ENCODE measurements at regions of chr1 and their contacts with region 1.

Region 1: DNA sequence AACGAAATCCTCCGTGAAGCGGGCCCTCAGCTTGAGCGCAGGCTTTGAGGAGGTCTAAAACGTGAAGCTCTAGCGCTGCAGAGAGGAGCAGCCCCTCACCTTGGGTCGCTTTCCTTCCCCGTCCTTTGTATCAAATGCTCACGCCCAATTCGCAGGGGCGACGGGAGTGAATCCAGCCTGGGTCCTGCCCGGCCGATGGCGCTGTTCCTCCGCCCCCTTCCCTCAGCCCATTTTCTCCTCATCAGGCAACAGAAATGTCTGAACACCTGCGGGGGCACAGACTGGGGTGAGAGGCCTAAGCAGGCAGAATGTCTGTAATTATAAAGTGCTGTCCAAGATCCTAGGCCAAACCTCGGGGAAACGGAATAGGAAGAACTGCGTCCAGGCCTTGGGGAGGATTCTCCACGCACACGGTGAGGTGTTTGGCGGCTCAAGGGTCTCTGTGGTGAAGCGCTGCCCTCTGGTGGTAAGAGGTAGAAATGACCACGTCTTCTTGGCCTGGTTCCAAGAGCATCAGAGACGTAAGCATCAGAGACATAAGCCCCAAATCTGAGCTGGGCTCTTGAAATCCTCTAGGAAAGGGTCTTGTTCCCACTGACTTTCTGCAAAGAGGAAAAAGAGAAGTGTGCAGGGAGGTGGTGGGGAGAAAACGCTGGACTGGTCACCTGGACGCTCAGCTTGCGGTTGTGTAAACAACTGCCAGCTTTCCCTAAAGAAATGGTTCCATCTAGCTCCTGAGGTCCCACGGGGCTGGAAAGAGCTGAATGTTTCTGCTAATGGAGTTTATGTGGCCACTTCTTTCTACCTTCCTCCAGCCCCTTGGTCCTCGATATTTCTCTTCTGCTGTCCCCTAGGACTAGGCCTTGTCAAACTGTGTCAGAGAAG is 92.1 kb upstream of the CD53 start:
- DNase-seq: peak; percentile 83
- H3K4me3 Mint-ChIP-seq: no peak overlapping the region
- H3K27ac Mint-ChIP-seq: no peak overlapping the region
- H3K4me1 Mint-ChIP-seq: peaks cover 29% of the 10 kb centered on the region
- H3K27me3 Mint-ChIP-seq: no peaks in the 10 kb centered on the region

Region 2: GRCh38 chr1:110524311-110525251 is 256.3 kb before region 1 on chr1:
- CTCF ChIA-PET with region 1: interaction called, 90 read pairs
- POLR2A ChIA-PET with region 1: no interaction called
- intact Hi-C with region 1: loop called (anchors 1 kb)
- DNase-seq: peak; percentile 65
- H3K4me3 Mint-ChIP-seq: no peak overlapping the region
- H3K27ac Mint-ChIP-seq: no peak overlapping the region
- H3K4me1 Mint-ChIP-seq: peaks cover 5% of the 10 kb centered on the region
- H3K27me3 Mint-ChIP-seq: peaks cover 17% of the 10 kb centered on the region

Region 3: GRCh38 chr1:110612065-110612751 is 168.6 kb before region 1 on chr1:
- CTCF ChIA-PET with region 1: interaction called, 240 read pairs
- POLR2A ChIA-PET with region 1: no interaction called
- intact Hi-C with region 1: no loop called
- DNase-seq: no peak
- H3K4me3 Mint-ChIP-seq: no peak overlapping the region
- H3K27ac Mint-ChIP-seq: no peak overlapping the region
- H3K4me1 Mint-ChIP-seq: peaks cover 18% of the 10 kb centered on the region
- H3K27me3 Mint-ChIP-seq: peaks cover 17% of the 10 kb centered on the region

Region 4: GRCh38 chr1:110668549-110668948 is 112.3 kb before region 1 on chr1:
- CTCF ChIA-PET with region 1: interaction called, 10 read pairs
- POLR2A ChIA-PET with region 1: no interaction called
- intact Hi-C with region 1: loop called (anchors 2 kb)
- DNase-seq: peak; percentile 14
- H3K4me3 Mint-ChIP-seq: peak overlapping the region; percentile 66
- H3K27ac Mint-ChIP-seq: peak overlapping the region; percentile 88
- H3K4me1 Mint-ChIP-seq: peaks cover 25% of the 10 kb centered on the region
- H3K27me3 Mint-ChIP-seq: no peaks in the 10 kb centered on the region

Region 5: DNA sequence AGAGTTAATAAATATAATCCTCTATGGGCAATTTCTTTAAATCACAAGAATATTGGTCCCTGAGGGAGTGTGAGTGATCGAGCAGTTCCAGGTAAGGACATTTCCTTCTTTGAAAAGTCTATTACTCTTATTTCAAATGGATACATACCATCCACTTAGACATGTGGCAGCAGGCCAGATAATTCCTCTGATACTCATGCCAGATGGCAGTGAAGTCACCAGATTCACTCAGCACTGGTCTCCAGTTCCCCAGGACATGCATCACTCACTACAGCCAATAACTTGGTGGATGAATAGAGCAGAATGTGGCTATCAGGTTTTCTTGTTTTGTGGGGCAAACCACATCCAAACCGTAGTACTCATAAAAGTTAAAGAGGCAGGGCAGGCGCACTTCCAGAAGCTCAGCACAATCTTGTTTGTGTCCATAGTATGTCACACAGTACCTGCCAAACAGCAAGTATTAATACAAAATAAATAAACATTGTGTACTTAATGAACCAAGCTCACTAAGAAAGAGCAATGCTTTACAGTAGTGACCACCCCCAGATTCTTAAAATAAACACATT is 17.9 kb after region 1 on chr1:
- CTCF ChIA-PET with region 1: interaction called, 13 read pairs
- POLR2A ChIA-PET with region 1: no interaction called
- intact Hi-C with region 1: no loop called
- DNase-seq: no peak
- H3K4me3 Mint-ChIP-seq: no peak overlapping the region
- H3K27ac Mint-ChIP-seq: no peak overlapping the region
- H3K4me1 Mint-ChIP-seq: no peaks in the 10 kb centered on the region
- H3K27me3 Mint-ChIP-seq: no peaks in the 10 kb centered on the region

Region 6: GRCh38 chr1:110986407-110986891 is 205.6 kb after region 1 on chr1:
- CTCF ChIA-PET with region 1: interaction called, 62 read pairs
- POLR2A ChIA-PET with region 1: no interaction called
- intact Hi-C with region 1: no loop called
- DNase-seq: no peak
- H3K4me3 Mint-ChIP-seq: no peak overlapping the region
- H3K27ac Mint-ChIP-seq: no peak overlapping the region
- H3K4me1 Mint-ChIP-seq: peaks cover 13% of the 10 kb centered on the region
- H3K27me3 Mint-ChIP-seq: peaks cover 13% of the 10 kb centered on the region